ENCODE measurements at regions of chr10 and their contacts with region 1.

Region 1: GRCh38 chr10:49592726-49593563 is 17.2 kb upstream of the SLC18A3 start:
- DNase-seq: peak; percentile 80
- H3K4me3 Mint-ChIP-seq: no peak overlapping the region
- H3K27ac Mint-ChIP-seq: peak overlapping the region; percentile 7
- H3K4me1 Mint-ChIP-seq: peaks cover 8% of the 10 kb centered on the region
- H3K27me3 Mint-ChIP-seq: peaks cover 36% of the 10 kb centered on the region
- CTCF ChIP-seq: peak; percentile 84

Region 2: DNA sequence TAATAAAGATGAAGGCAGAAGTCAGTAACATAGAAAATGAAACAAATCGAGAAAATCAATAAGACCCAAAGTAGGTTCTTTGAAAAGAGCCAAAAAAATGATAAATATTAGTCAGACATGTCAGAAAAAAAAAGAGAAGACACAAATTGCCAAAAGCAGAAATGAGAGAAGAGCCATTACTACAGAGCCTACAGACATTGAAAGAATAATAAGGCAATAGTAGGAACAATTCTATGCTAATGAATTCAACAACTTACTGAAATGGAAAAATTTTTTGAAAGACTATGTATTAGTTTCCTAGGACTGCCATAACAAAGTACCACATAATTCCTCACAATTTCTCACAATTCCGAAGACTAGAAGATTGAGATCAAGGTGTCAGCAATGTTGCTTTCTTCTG is 133.6 kb after region 1 on chr10:
- CTCF ChIA-PET with region 1: no interaction called
- intact Hi-C with region 1: no loop called
- DNase-seq: no peak
- H3K4me3 Mint-ChIP-seq: no peak overlapping the region
- H3K27ac Mint-ChIP-seq: no peak overlapping the region
- H3K4me1 Mint-ChIP-seq: no peaks in the 10 kb centered on the region
- H3K27me3 Mint-ChIP-seq: peaks cover 31% of the 10 kb centered on the region
- CTCF ChIP-seq: no peak

Region 3: GRCh38 chr10:49761789-49762565 is 169.0 kb after region 1 on chr10 and contains the start of gene OGDHL:
- CTCF ChIA-PET with region 1: no interaction called
- intact Hi-C with region 1: loop called (anchors 10 kb)
- DNase-seq: peak; percentile 73
- H3K4me3 Mint-ChIP-seq: peak within 1 kb of the TSS; percentile 72
- H3K27ac Mint-ChIP-seq: no peak within 1 kb of the TSS
- H3K4me1 Mint-ChIP-seq: no peaks in the 10 kb centered on the region
- H3K27me3 Mint-ChIP-seq: peaks cover 68% of the 10 kb centered on the region
- CTCF ChIP-seq: no peak
- total RNA-seq, gene OGDHL: 0.24 and 1.0 TPM in 2 replicates

Region 4: GRCh38 chr10:50224330-50224952 is 631.5 kb after region 1 on chr10:
- CTCF ChIA-PET with region 1: no interaction called
- intact Hi-C with region 1: loop called (anchors 1 kb)
- DNase-seq: peak; percentile 52
- H3K4me3 Mint-ChIP-seq: no peak overlapping the region
- H3K27ac Mint-ChIP-seq: no peak overlapping the region
- H3K4me1 Mint-ChIP-seq: no peaks in the 10 kb centered on the region
- H3K27me3 Mint-ChIP-seq: peaks cover 52% of the 10 kb centered on the region
- CTCF ChIP-seq: peak; percentile 43